BJ (cell line): ENCODE measurements at regions of chr1 and their contacts with region 1.

Region 1: DNA sequence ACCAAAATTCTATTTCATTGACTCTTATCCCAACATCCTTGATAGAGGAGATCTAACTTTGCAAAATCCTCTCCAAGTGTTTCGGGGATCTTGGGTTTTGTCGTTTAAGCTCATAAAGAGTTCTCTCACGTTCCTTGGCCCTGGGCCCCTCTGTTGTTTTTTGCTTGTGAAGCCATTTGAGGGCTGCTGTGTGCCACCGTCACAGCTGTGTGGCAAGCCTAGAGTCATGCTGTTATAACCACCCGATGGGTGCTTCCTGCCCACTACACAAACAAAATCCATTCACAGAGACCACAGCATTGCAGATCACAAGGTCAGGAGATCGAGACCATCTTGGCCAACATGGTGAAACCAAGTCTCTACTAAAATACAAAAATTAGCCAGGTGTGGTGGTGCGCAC is 154.1 kb downstream of the ADSS2 start:
- DNase-seq: no peak
- H3K4me3 ChIP-seq: no peak overlapping the region
- H3K27me3 ChIP-seq: no peaks in the 10 kb centered on the region
- CTCF ChIP-seq: no peak

Region 2: DNA sequence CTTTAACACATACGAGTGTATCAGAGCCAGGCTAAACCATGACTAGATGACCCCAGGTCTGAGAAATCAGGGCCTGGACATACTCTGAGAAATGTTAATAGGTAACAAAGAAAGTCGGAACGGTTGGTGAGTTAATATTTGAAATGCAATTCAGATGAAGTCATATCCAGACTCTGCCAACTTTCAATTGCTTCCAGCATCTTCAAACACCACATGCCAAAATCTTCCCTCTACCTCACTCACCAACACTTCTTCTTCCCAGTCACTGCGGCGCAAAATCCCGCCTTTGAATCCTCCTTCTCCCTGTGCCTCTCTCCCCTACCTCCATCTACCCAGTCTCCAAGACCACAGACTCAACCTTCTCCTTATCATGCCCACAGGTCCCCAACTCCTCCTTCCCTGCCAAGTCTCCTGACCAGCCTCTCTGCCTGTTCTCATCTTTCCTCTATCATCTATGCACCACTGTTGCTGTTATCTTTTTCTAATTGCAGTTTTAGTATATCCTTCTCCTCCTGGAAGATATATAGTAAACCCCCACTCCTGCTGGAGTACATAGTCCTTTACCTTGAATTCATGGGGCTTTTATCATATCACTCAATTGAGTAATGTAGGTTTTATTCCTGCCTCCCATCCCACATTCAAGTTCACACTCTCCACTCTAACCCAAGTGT is 205.2 kb before region 1 on chr1:
- CTCF ChIA-PET with region 1: no interaction called
- POLR2A ChIA-PET with region 1: no interaction called
- DNase-seq: peak; percentile 57
- H3K4me3 ChIP-seq: no peak overlapping the region
- H3K27me3 ChIP-seq: no peaks in the 10 kb centered on the region
- CTCF ChIP-seq: no peak

Region 3: GRCh38 chr1:244283772-244284171 is 13.8 kb before region 1 on chr1:
- CTCF ChIA-PET with region 1: interaction called, 25 read pairs
- POLR2A ChIA-PET with region 1: no interaction called
- DNase-seq: no peak
- H3K4me3 ChIP-seq: no peak overlapping the region
- H3K27me3 ChIP-seq: peaks cover 2% of the 10 kb centered on the region; the same call in 1 of the 2 replicates
- CTCF ChIP-seq: no peak